GM23248 (cell line): ENCODE measurements at regions of chr15 and their contacts with region 1.

Region 1: GRCh38 chr15:34914317-34914716 is 55.2 kb downstream of the AQR start:
- DNase-seq: no peak
- H3K4me3 ChIP-seq: no peak overlapping the region
- H3K27ac ChIP-seq: no peak overlapping the region
- H3K4me1 ChIP-seq: peaks cover 1% of the 10 kb centered on the region; the same call in 1 of the 2 replicates
- H3K27me3 ChIP-seq: no peaks in the 10 kb centered on the region

Region 2: GRCh38 chr15:34708422-34708821 is 205.9 kb before region 1 on chr15:
- in situ Hi-C with region 1: loop called (anchors 10 kb)
- DNase-seq: peak; percentile 79
- H3K4me3 ChIP-seq: no peak overlapping the region
- H3K27ac ChIP-seq: peak overlapping the region; percentile 75
- H3K4me1 ChIP-seq: peaks cover 26% of the 10 kb centered on the region
- H3K27me3 ChIP-seq: no peaks in the 10 kb centered on the region

Region 3: DNA sequence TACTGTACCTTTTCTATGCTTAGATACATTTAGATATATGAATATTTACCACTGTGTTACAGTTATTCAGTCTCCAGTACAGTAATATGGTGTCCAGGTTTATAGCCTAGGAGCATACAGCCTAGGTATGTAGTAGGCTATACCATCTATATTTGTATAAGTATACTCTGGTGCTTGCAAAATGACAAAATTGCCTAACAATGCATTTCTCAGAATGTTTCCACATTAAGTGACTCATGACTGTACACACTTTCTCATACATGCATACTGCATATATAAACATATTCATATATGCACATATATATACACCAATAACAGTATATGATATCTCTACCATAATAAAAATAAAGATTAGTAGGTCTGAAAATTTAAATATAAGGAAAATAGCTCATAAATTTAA is 462.4 kb after region 1 on chr15:
- in situ Hi-C with region 1: no loop called
- DNase-seq: no peak
- H3K4me3 ChIP-seq: no peak overlapping the region
- H3K27ac ChIP-seq: no peak overlapping the region
- H3K4me1 ChIP-seq: no peaks in the 10 kb centered on the region
- H3K27me3 ChIP-seq: no peaks in the 10 kb centered on the region